ENCODE measurements at regions of chr12 and their contacts with region 1.

Region 1: GRCh38 chr12:15532364-15532977 is 210.2 kb downstream of the PTPRO start:
- DNase-seq: no peak
- ATAC-seq: peak; percentile 85
- H3K4me3 Mint-ChIP-seq: no peak overlapping the region
- H3K27ac Mint-ChIP-seq: no peak overlapping the region
- H3K4me1 Mint-ChIP-seq: peaks cover 8% of the 10 kb centered on the region
- H3K27me3 Mint-ChIP-seq: no peaks in the 10 kb centered on the region
- CTCF ChIP-seq: peak; percentile 84

Region 2: GRCh38 chr12:15546102-15546701 is 13.7 kb after region 1 on chr12:
- CTCF ChIA-PET with region 1: interaction called, 60 read pairs
- POLR2A ChIA-PET with region 1: interaction called, 18 read pairs
- intact Hi-C with region 1: loop called (anchors 1 kb)
- DNase-seq: no peak
- ATAC-seq: peak; percentile 76
- H3K4me3 Mint-ChIP-seq: peak overlapping the region; percentile 87
- H3K27ac Mint-ChIP-seq: peak overlapping the region; percentile 99
- H3K4me1 Mint-ChIP-seq: peaks cover 60% of the 10 kb centered on the region
- H3K27me3 Mint-ChIP-seq: no peaks in the 10 kb centered on the region
- CTCF ChIP-seq: no peak

Region 3: DNA sequence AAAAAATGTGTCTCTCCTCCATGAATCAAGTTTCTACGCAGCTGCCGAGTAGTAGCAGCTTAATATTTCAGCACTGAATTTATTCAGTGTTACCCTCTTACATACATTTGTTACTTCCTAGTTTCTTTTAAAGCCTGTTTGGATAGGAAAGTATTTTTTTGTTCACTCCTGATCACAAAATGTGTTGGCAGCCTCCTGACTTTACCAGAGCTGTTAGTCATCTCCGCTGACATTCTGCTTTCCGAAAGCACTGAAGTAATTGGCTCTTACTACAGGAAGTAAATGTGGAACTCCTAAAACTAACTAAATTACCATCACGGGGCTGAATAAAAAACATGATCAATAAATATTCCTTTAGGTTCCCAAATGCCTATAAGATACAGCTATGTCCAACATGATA is 31.2 kb after region 1 on chr12:
- CTCF ChIA-PET with region 1: interaction called, 19 read pairs
- POLR2A ChIA-PET with region 1: interaction called, 3 read pairs
- intact Hi-C with region 1: no loop called
- DNase-seq: no peak
- ATAC-seq: peak; percentile 68
- H3K4me3 Mint-ChIP-seq: peak overlapping the region; percentile 81
- H3K27ac Mint-ChIP-seq: peak overlapping the region; percentile 86
- H3K4me1 Mint-ChIP-seq: peaks cover 24% of the 10 kb centered on the region
- H3K27me3 Mint-ChIP-seq: no peaks in the 10 kb centered on the region
- CTCF ChIP-seq: no peak

Region 4: DNA sequence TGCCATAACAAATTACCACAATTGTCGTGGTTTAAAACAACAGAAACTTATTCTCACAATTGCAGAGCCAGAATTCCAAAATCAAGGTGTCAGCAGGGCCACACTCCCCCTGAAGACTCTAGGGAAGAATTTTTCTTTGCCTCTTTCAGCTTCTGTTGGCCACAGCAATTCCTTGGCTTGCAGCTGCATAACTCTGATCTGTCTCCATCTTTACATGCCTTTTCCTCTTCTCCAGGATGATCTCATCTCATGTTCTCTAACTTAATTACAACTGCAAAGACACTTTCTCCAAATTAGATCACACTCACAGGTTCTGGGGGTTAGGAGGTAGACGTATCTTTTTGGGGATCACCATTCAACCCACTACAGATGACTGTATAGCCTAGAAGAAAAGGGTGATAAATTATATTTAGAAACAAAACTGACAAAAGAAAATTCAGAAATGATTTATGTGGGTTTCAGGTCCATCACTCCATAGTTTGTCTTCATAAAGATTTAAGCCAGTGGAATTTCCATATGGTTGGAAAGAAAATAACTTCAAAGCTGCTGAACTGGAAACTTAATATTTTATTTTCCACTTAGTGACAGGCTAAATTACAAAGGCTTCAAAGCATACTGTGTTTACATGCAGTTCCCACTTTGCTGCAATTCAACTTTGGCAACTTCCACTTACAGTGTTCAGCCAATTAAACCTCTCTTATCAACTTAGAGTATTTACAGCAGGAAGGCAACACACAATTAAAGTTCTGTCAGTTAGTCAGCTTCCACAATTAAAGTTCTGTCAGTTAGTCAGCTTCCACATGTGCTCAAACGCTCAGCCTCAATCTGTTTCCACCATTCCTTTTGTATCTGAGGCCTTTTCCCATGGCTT is 43.4 kb after region 1 on chr12:
- CTCF ChIA-PET with region 1: interaction called, 480 read pairs
- POLR2A ChIA-PET with region 1: interaction called, 12 read pairs
- intact Hi-C with region 1: loop called (anchors 1 kb)
- DNase-seq: no peak
- ATAC-seq: no peak
- H3K4me3 Mint-ChIP-seq: no peak overlapping the region
- H3K27ac Mint-ChIP-seq: no peak overlapping the region
- H3K4me1 Mint-ChIP-seq: peaks cover 10% of the 10 kb centered on the region
- H3K27me3 Mint-ChIP-seq: no peaks in the 10 kb centered on the region
- CTCF ChIP-seq: no peak

Region 5: DNA sequence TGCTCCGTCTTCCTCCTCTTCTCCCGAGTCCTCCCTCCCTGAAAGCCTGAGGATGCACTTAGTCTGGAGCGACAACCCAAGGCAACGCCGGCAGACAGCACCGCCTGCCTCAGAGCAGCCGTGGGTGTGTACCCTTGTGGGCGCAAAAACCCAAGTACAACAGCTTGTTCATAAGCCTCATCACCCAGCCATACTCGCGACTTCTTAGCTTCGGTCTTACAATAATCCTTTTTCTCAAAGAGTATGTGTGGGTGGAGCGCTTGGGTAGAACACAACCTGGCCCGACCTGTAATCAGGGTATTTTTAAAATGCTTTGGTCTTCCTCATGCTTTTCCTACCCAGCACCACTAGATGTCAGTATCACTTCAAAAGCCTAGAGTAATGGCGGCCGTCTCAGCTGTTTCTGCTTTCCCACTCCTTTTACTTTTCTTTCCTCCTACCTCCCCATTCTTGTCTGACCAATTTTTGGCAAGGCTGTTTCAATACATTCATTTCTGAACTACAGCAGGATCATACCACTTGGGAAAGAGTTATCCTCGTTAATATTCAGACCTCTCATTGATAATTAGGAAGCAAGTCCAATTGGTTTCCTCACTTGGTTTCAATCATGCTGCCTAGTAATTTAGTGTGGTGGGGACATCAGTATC is 57.8 kb after region 1 on chr12:
- CTCF ChIA-PET with region 1: interaction called, 480 read pairs
- POLR2A ChIA-PET with region 1: interaction called, 16 read pairs
- intact Hi-C with region 1: no loop called
- DNase-seq: peak; percentile 22
- ATAC-seq: peak; percentile 98
- H3K4me3 Mint-ChIP-seq: peak overlapping the region; percentile 72
- H3K27ac Mint-ChIP-seq: peak overlapping the region; percentile 14
- H3K4me1 Mint-ChIP-seq: peaks cover 9% of the 10 kb centered on the region
- H3K27me3 Mint-ChIP-seq: no peaks in the 10 kb centered on the region
- CTCF ChIP-seq: peak; percentile 55

Region 6: GRCh38 chr12:15789220-15790171 is 257.0 kb after region 1 on chr12 and contains the start of gene EPS8:
- CTCF ChIA-PET with region 1: no interaction called
- POLR2A ChIA-PET with region 1: no interaction called
- intact Hi-C with region 1: loop called (anchors 5 kb)
- DNase-seq: peak; percentile 91
- ATAC-seq: peak; percentile 96
- H3K4me3 Mint-ChIP-seq: peak within 1 kb of the TSS; percentile 91
- H3K27ac Mint-ChIP-seq: peak within 1 kb of the TSS; percentile 46
- H3K4me1 Mint-ChIP-seq: peaks cover 14% of the 10 kb centered on the region
- H3K27me3 Mint-ChIP-seq: peaks cover 47% of the 10 kb centered on the region
- CTCF ChIP-seq: no peak
- total RNA-seq, gene EPS8: 0.73 and 0.89 TPM in 2 replicates

Region 7: GRCh38 chr12:15899282-15899870 is 366.9 kb after region 1 on chr12:
- CTCF ChIA-PET with region 1: interaction called, 16 read pairs
- POLR2A ChIA-PET with region 1: no interaction called
- intact Hi-C with region 1: loop called (anchors 1 kb)
- DNase-seq: no peak
- ATAC-seq: peak; percentile 57
- H3K4me3 Mint-ChIP-seq: no peak overlapping the region
- H3K27ac Mint-ChIP-seq: no peak overlapping the region
- H3K4me1 Mint-ChIP-seq: peaks cover 5% of the 10 kb centered on the region
- H3K27me3 Mint-ChIP-seq: no peaks in the 10 kb centered on the region
- CTCF ChIP-seq: no peak